IMR-90 (cell line): ENCODE measurements at regions of chr13 and their contacts with region 1.

Region 1: GRCh38 chr13:60733933-60734332 is 336.9 kb downstream of the TDRD3 start:
- DNase-seq: no peak
- ATAC-seq: no peak
- H3K4me3 ChIP-seq: no peak overlapping the region
- H3K27ac ChIP-seq: no peak overlapping the region
- H3K4me1 ChIP-seq: no peaks in the 10 kb centered on the region
- H3K27me3 ChIP-seq: no peaks in the 10 kb centered on the region
- CTCF ChIP-seq: no peak
- POLR2A ChIP-seq: no peak
- RAD21 ChIP-seq: no peak

Region 2: DNA sequence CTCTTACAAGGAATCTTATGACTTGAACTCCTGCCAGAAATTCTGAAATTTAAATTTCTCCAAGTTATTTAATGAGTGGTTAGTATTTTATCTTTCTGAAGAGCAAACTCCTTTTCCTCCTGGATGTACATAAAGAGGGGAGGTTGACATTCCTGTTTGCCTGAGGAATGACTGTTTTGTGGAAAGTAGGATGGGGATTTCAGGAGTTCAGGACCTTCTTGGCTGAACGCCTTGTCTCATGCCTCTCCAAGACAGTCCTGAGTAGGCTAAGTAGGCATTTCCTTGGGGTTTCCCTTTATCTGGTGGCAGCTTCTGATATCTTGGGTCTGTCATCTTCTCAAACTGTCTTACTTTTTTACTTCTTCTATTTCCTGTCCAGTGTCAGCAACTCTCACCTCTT is 19.7 kb after region 1 on chr13:
- CTCF ChIA-PET with region 1: interaction called, 3 read pairs
- POLR2A ChIA-PET with region 1: no interaction called
- dilution Hi-C with region 1: no loop called
- in situ Hi-C with region 1: no loop called
- intact Hi-C with region 1: loop called (anchors 2 kb)
- DNase-seq: no peak
- ATAC-seq: no peak
- H3K4me3 ChIP-seq: no peak overlapping the region
- H3K27ac ChIP-seq: no peak overlapping the region
- H3K4me1 ChIP-seq: no peaks in the 10 kb centered on the region
- H3K27me3 ChIP-seq: no peaks in the 10 kb centered on the region
- CTCF ChIP-seq: no peak
- POLR2A ChIP-seq: no peak
- RAD21 ChIP-seq: no peak